Sigmoid colon (tissue), 7 donors: ENCODE measurements at regions of chr12 and their contacts with region 1.

Region 1: GRCh38 chr12:121811434-121812319 is 7.9 kb downstream of the SETD1B start:
- DNase-seq: peak; percentile 87
- H3K4me3 ChIP-seq: peak overlapping the region; percentile 43 to 75 (median 59)
- H3K27ac ChIP-seq: peak overlapping the region; percentile 79 to 85 (median 82)
- H3K4me1 ChIP-seq: peaks cover 0 to 57% (median 48%) of the 10 kb centered on the region in 4 donors
- H3K27me3 ChIP-seq: no peaks in the 10 kb centered on the region
- CTCF ChIP-seq: peak; percentile 83 to 100 (median 92)
- EP300 ChIP-seq: no peak
- POLR2A ChIP-seq: no peak

Region 2: DNA sequence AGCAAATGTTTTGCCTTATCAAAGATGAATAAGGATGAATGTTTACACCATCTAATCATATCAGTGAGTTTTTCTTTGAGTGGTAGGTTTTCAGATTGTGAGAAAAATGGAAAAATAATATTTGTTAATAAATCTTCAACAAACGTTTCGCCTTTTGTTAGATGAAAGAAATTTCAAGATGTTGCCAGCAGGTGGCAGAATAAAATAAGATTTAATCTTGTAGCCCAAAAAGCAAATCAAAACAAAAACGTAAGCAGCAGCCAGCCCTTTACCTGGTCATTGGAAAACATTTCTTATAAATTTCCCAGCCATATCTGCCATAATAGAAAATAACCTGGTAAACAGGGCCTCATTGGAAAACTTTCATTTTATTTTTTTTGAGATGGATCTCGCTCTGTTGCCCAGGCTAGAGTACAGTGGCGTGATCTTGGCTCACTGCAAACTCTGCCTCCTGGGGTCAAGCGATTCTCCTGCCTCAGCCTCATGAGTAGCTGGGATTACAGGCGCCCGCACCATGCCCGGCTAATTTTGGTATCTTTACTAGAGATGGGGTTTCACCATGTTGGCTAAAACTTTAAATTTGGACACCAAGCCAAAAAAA is 114.5 kb before region 1 on chr12:
- intact Hi-C with region 1: loop called (anchors 5 kb)
- DNase-seq: no peak
- H3K4me3 ChIP-seq: no peak overlapping the region
- H3K27ac ChIP-seq: no peak overlapping the region
- H3K4me1 ChIP-seq: peaks cover 0 to 6% (median 3%) of the 10 kb centered on the region in 4 donors
- H3K27me3 ChIP-seq: no peaks in the 10 kb centered on the region
- CTCF ChIP-seq: peak; percentile 39 to 66 (median 60)
- EP300 ChIP-seq: no peak
- POLR2A ChIP-seq: no peak

Region 3: GRCh38 chr12:121767525-121768016 is 44.1 kb before region 1 on chr12:
- intact Hi-C with region 1: no loop called
- DNase-seq: peak; percentile 85
- H3K4me3 ChIP-seq: peak overlapping the region in 1 of 4 donors; percentile 11
- H3K27ac ChIP-seq: peak overlapping the region; percentile 65 to 81 (median 68)
- H3K4me1 ChIP-seq: peaks cover 0 to 42% (median 36%) of the 10 kb centered on the region in 4 donors
- H3K27me3 ChIP-seq: no peaks in the 10 kb centered on the region
- CTCF ChIP-seq: no peak
- EP300 ChIP-seq: no peak
- POLR2A ChIP-seq: no peak

Region 4: DNA sequence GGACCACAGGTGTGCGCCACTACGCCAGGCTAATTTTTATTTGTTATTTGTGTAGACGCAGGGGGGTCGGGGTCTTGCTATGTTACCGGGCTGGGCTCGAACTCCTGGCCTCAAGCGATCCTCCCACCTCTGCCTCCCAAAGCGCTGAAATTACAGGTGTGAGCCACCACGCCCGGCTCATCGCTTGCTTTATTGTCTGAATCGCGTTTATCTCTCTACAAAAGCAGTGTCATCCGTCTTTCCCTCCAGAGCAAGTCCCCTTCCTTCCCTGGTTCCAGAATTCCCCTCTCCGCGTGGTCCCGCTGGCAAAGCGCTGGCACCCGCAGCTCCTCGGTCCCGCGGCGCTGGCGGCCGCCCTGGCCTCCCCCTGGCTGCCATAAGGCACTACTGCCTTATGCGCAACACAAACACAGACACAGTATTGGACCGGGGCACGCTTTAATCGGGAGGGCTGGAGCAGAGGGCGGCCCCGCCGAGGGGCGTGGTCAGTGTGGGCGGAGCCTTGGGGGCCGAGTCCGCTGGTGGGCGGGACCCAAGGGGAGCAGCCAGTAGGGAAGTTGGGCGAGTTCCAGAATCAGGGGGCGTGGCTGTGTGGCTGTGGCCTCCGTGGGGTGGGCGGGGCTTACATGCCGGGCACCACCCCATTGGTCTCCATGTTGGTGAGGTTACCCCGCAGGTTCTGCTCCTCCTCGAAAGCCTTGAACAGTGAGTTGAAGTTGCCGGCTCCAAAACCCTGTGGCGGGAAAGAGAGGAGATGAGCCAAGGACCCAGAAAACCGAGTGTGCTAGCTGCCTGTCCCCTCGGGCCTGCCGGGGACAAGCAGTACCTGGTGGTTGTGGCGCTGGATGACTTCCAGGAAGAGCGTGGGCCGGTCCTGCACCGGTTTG is 27.7 kb after region 1 on chr12:
- intact Hi-C with region 1: loop called (anchors 2 kb)
- DNase-seq: peak; percentile 100
- H3K4me3 ChIP-seq: peak overlapping the region; percentile 45 to 57 (median 54)
- H3K27ac ChIP-seq: peak overlapping the region; percentile 55 to 78 (median 75)
- H3K4me1 ChIP-seq: peaks cover 0 to 13% (median 11%) of the 10 kb centered on the region in 4 donors
- H3K27me3 ChIP-seq: no peaks in the 10 kb centered on the region
- CTCF ChIP-seq: peak; percentile 30 to 53 (median 48)
- EP300 ChIP-seq: no peak
- POLR2A ChIP-seq: peak; percentile 16 to 26